ENCODE measurements at regions of chr11 and their contacts with region 1.

Region 1: GRCh38 chr11:128643661-128644317 is 50.1 kb upstream of the FLI1 start:
- H3K4me3 Mint-ChIP-seq: no peak overlapping the region
- H3K27ac Mint-ChIP-seq: no peak overlapping the region
- H3K4me1 Mint-ChIP-seq: peaks cover 23% of the 10 kb centered on the region
- H3K27me3 Mint-ChIP-seq: no peaks in the 10 kb centered on the region

Region 2: GRCh38 chr11:128772814-128773213 is 129.0 kb after region 1 on chr11:
- intact Hi-C with region 1: no loop called
- H3K4me3 Mint-ChIP-seq: no peak overlapping the region
- H3K27ac Mint-ChIP-seq: peak overlapping the region; percentile 13
- H3K4me1 Mint-ChIP-seq: peaks cover 30% of the 10 kb centered on the region
- H3K27me3 Mint-ChIP-seq: no peaks in the 10 kb centered on the region

Region 3: GRCh38 chr11:128831174-128832120 is 187.7 kb after region 1 on chr11:
- intact Hi-C with region 1: loop called (anchors 10 kb)
- H3K4me3 Mint-ChIP-seq: no peak overlapping the region
- H3K27ac Mint-ChIP-seq: no peak overlapping the region
- H3K4me1 Mint-ChIP-seq: peaks cover 40% of the 10 kb centered on the region
- H3K27me3 Mint-ChIP-seq: no peaks in the 10 kb centered on the region